Calu3 (cell line): ENCODE measurements at regions of chr7 and their contacts with region 1.

Region 1: DNA sequence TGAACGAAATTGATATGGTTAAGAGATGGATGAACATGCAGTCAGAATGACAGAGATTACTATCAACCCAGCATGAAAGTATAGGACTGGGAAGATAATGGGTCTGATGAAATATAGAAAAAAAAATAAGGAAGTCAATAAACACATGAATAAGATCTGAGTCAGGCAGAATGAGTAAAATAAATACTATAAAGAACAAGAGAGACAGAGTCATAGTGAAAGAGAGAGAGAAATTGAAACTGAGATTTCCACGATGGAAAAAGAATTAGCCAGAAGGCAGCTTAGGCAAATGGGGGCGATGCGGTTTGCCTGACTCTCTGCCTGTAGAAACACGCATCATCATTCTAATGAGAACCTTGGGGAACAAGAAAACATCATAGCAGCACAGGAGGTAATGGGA is 26.6 kb downstream of the SEMA3D start:
- DNase-seq: no peak
- H3K4me3 Mint-ChIP-seq: peak overlapping the region; percentile 15
- H3K27ac Mint-ChIP-seq: no peak overlapping the region
- H3K4me1 Mint-ChIP-seq: peaks cover 26% of the 10 kb centered on the region
- H3K27me3 Mint-ChIP-seq: no peaks in the 10 kb centered on the region
- CTCF ChIP-seq: no peak

Region 2: GRCh38 chr7:85054306-85054705 is 105.9 kb before region 1 on chr7:
- CTCF ChIA-PET with region 1: no interaction called
- intact Hi-C with region 1: loop called (anchors 10 kb)
- DNase-seq: no peak
- H3K4me3 Mint-ChIP-seq: no peak overlapping the region
- H3K27ac Mint-ChIP-seq: no peak overlapping the region
- H3K4me1 Mint-ChIP-seq: no peaks in the 10 kb centered on the region
- H3K27me3 Mint-ChIP-seq: no peaks in the 10 kb centered on the region
- CTCF ChIP-seq: no peak

Region 3: DNA sequence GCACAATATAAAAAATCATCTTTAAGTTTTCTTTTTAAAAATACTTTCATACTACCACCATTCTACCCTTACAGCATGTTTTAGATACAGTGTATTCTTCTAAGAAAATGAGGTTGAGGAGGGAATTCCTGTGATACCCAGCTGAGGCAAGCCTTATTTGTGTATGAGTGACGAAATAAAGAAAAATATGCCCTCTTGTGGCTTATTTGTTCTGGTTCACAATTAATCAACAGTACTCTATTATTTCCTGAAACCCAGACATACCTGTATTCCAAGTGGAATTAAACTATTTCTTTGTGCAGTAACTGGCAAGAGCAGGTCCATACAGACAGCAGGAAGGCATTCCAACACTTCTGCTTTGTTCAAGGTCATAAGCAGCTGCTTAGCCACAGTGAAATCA is 31.2 kb after region 1 on chr7:
- CTCF ChIA-PET with region 1: no interaction called
- intact Hi-C with region 1: no loop called
- DNase-seq: no peak
- H3K4me3 Mint-ChIP-seq: no peak overlapping the region
- H3K27ac Mint-ChIP-seq: no peak overlapping the region
- H3K4me1 Mint-ChIP-seq: no peaks in the 10 kb centered on the region
- H3K27me3 Mint-ChIP-seq: no peaks in the 10 kb centered on the region
- CTCF ChIP-seq: no peak

Region 4: GRCh38 chr7:85426487-85426960 is 266.3 kb after region 1 on chr7:
- CTCF ChIA-PET with region 1: no interaction called
- intact Hi-C with region 1: no loop called
- DNase-seq: no peak
- H3K4me3 Mint-ChIP-seq: no peak overlapping the region
- H3K27ac Mint-ChIP-seq: no peak overlapping the region
- H3K4me1 Mint-ChIP-seq: no peaks in the 10 kb centered on the region
- H3K27me3 Mint-ChIP-seq: no peaks in the 10 kb centered on the region
- CTCF ChIP-seq: no peak